ENCODE measurements at regions of chr17 and their contacts with region 1.

Region 1: DNA sequence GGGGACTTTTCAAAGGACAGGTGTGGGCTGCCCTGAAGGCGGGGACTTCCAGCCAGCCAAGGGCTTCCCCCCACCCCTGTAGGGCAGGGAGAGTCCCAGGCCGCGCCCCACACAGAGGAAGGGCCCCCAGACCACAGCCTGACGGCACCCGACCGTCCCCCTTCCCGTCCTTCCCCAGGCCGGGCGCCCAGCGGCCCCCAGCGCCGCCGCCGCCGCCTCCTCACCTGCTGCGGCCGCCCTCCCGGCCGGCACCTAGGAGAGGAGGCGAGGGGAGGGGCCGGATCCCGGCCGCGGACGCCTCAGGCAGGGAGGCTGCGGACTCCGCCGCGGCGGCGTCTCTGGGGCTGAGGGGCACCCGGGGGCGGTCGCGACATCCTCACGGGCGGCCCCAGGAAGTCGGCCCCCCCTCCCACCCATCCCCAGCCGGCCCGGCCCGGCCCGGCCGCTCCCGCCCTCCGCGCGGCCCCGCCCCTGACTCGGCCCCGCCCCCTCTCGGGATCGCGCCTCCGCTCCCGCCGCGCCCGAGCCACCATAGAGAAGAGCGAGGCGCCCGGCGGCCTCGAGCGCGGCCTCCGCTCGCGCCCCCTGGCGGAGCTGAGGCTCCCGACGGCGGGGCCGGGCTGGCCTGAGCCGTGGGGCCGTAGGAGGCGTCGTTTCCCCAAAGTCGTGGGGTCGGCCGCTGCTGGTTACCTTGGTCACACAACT is 25.5 kb upstream of the RFFL start:
- DNase-seq: peak; percentile 61 to 93
- H3K4me3 ChIP-seq: peak overlapping the region; percentile 85 to 98
- H3K27ac ChIP-seq: peak overlapping the region; percentile 81 to 90
- H3K4me1 ChIP-seq: peaks cover 2 to 11% of the 10 kb centered on the region in 2 donors
- H3K27me3 ChIP-seq: no peaks in the 10 kb centered on the region
- CTCF ChIP-seq: peak; percentile 66 to 91 (median 78)

Region 2: DNA sequence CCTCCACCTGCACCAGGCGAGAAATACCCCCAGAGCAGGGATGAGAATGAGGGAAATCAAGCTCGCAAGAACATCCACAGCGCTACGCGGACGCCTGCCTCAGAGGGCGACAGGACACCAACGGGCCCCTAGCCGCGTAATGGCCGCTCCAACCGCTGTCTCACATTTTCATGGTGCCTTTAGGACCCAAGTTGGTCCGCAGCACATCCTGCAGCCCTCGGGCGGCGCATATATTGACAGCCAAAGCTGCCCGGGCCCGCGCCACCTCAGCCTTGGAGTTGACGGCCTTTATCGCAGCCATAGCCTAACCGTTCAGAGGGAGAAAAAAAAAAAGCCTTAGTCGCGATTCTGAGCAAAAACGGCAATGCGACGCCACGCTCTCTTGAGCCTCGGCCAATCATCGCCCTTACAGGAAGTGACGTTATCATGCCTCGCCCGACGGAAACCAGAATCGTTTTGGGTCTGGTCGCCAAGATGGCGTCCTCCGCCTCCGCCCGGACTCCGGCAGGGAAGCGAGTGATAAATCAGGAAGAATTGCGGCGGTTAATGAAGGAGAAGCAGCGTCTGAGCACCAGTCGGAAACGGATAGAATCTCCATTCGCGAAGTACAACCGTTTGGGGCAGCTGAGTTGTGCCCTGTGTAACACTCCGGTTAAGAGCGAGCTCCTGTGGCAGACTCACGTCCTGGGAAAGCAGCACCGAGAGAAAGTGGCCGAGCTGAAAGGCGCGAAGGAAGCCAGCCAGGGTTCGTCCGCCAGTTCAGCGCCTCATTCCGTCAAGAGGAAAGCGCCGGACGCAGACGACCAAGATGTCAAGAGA is 127.7 kb before region 1 on chr17 and contains the starts of genes CCT6B and ZNF830:
- intact Hi-C with region 1: loop called (anchors 1 kb)
- DNase-seq: peak; percentile 65 to 96
- H3K4me3 ChIP-seq: peak within 1 kb of the TSS; percentile 84
- H3K27ac ChIP-seq: peak within 1 kb of the TSS; percentile 87 to 93
- H3K4me1 ChIP-seq: peaks cover 5 to 10% of the 10 kb centered on the region in 2 donors
- H3K27me3 ChIP-seq: no peaks in the 10 kb centered on the region
- CTCF ChIP-seq: peak in 1 of 3 experiments; percentile 1
- total RNA-seq, gene CCT6B: not detected
- total RNA-seq, gene ZNF830: 1.9 TPM

Region 3: DNA sequence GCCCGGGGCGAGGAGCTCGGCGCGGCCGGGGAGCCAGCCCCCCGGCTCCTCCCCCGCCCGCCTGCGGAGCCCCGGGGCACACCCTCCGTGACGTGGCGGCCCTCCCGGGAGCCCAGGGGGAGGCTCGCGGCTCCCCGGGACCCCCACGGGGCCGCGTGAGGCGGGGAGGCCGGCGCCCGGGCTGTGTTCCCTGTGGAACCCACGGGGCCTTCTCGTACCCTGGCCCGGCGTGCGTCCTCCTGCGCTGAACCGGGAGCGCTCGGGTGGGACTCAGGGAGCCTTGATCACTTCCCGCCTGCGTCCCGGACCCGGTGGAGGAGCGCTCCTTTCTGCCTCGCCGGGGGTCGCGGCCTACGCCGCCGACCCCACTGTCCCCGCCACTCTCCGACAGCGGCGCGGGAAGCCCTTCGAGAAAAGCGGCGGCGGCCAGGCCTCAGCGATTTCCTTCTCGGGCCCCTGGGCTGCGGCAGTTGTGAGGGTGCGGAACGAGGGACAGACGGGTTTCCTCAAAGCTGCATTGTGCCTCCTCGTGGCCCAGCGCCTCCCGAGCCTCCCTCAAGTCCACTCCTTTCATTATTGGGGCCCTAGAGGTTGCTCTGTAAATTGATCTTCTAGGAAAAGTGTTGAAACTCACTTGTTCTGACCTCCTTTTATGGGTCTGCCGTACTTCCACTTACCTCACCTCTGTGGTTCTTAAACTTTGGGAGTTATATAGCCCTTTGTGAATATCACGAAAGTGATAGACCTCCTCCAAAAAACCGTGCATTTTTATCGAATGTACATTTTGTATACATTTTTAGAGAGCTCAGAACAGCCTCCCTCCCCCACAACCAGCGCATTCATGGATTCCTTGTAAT is 108.1 kb before region 1 on chr17:
- intact Hi-C with region 1: loop called (anchors 1 kb)
- DNase-seq: peak in 1 of 2 donors; percentile 82
- H3K4me3 ChIP-seq: peak overlapping the region; percentile 96 to 97
- H3K27ac ChIP-seq: peak overlapping the region; percentile 99 to 100
- H3K4me1 ChIP-seq: peaks cover 0 to 22% of the 10 kb centered on the region in 2 donors
- H3K27me3 ChIP-seq: no peaks in the 10 kb centered on the region
- CTCF ChIP-seq: peak in 2 of 3 experiments; percentile 18 to 48

Region 4: GRCh38 chr17:34998205-34998604 is 90.8 kb before region 1 on chr17:
- intact Hi-C with region 1: loop called (anchors 5 kb)
- DNase-seq: peak in 1 of 2 donors; percentile 22
- H3K4me3 ChIP-seq: no peak overlapping the region
- H3K27ac ChIP-seq: peak overlapping the region; percentile 54 to 76
- H3K4me1 ChIP-seq: peaks cover 0 to 13% of the 10 kb centered on the region in 2 donors
- H3K27me3 ChIP-seq: no peaks in the 10 kb centered on the region
- CTCF ChIP-seq: peak; percentile 33 to 53 (median 48)

Region 5: DNA sequence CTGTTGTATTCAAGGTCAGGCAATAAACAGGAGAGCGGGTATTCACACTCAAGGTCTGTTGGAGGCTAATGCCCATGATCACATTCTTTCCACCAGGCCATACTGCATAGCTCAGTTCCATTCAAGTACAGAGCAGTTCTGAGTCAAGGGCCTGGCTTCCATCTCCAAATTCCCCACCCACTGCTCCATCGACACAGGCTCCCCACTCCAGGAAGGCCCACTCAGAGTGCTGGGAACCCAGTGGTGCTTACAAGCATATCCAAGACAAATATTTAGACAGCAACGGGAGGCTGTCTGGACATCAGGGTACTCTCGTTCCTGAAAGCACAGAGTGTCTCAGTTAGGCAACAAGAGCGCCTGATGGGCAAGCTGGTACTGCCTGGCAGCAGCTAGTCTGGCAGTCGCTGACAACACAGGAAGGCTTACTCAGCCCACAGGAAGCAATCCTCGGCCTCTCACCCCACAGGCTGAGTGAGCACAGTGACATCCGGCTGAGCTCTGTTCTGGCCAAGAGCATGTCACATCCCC is 66.4 kb before region 1 on chr17:
- intact Hi-C with region 1: loop called (anchors 1 kb)
- DNase-seq: peak; percentile 89 to 96
- H3K4me3 ChIP-seq: no peak overlapping the region
- H3K27ac ChIP-seq: peak overlapping the region; percentile 85 to 92
- H3K4me1 ChIP-seq: peaks cover 9 to 19% of the 10 kb centered on the region in 2 donors
- H3K27me3 ChIP-seq: no peaks in the 10 kb centered on the region
- CTCF ChIP-seq: peak in 2 of 3 experiments; percentile 37 to 45

Region 6: DNA sequence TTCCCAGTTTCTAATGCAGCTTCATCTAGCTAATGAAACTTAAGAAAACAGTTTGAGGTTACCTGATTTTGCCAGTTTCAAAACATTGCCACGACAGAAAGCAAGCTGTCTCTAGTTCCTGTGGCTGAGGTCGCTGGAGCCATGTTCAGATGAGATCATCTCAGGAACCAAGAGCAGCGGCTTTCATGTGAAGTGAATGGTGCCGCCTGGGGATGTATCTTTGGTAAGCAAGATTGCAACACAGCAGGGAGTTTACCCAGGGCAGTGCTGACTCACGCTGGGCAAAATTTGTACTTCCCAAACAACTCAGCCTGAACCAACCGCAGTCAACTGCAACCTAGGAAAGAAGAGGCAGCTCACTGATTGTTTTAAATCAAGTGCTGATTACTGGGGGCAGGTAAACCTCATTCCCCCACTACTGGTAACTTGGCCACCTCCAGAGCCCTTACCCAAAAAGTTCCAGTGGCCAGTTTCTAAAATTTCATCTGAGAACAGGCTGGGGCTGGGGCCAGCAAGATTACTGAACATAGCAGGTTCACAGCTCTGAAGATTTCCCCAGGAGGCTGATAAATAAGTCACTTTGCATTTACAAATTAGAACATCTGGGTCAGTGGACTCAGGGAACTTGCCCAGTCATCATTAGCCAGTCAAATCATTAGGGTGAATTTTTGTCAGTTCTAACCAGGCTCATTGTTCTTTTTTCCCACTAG is 25.4 kb before region 1 on chr17 and contains the start of gene RFFL:
- intact Hi-C with region 1: loop called (anchors 1 kb)
- DNase-seq: peak; percentile 81 to 95
- H3K4me3 ChIP-seq: peak within 1 kb of the TSS in 1 of 2 donors; percentile 24
- H3K27ac ChIP-seq: peak within 1 kb of the TSS; percentile 68 to 83
- H3K4me1 ChIP-seq: peaks cover 0 to 8% of the 10 kb centered on the region in 2 donors
- H3K27me3 ChIP-seq: no peaks in the 10 kb centered on the region
- CTCF ChIP-seq: peak in 1 of 3 experiments; percentile 29
- total RNA-seq, gene RFFL: 20.0 TPM

Region 7: DNA sequence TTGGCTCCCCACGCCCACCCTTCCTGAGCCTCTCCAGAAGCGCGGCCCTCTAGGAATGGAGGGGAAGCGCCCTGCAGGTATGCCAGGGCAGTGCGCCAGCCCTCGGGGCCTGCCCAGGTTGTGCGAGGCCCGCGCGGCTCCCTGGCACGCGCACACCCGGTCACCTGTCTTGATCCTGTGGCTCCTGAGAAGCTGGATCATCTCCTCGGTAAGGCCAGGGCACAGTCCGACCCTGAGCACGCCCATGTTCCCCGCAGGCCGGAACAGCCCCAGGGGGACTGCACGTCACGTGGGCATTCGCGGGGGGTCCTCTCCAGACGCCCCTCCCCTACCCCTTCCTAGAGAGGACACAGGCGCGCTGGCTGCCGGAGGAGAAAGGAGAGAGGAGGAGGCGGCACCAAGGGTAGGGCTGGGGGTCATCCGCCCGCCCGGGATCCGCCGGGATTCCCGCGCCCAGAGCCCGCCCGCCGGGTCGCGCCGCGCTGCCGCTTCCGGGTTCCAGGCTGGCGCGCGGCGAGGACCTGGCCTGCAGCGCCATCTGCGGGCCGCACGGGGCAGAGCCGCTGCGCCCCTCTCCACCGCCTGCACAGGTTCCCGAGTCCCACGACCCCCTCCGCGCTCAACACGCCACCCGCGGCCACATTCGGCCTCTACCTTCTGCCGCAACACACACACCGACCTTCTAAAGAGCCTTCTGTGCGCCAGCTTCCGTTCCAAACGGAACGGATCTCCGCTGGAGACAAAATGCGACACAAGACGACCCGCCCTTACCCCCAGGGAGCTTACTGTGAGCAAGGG is 30.5 kb after region 1 on chr17 and contains the start of gene RAD51D:
- intact Hi-C with region 1: loop called (anchors 1 kb)
- DNase-seq: peak in 1 of 2 donors; percentile 85
- H3K4me3 ChIP-seq: peak within 1 kb of the TSS; percentile 84 to 91
- H3K27ac ChIP-seq: peak within 1 kb of the TSS; percentile 75 to 81
- H3K4me1 ChIP-seq: peaks cover 4 to 17% of the 10 kb centered on the region in 2 donors
- H3K27me3 ChIP-seq: no peaks in the 10 kb centered on the region
- CTCF ChIP-seq: peak; percentile 77 to 97 (median 82)
- total RNA-seq, gene RAD51D: 3.7 TPM

Region 8: DNA sequence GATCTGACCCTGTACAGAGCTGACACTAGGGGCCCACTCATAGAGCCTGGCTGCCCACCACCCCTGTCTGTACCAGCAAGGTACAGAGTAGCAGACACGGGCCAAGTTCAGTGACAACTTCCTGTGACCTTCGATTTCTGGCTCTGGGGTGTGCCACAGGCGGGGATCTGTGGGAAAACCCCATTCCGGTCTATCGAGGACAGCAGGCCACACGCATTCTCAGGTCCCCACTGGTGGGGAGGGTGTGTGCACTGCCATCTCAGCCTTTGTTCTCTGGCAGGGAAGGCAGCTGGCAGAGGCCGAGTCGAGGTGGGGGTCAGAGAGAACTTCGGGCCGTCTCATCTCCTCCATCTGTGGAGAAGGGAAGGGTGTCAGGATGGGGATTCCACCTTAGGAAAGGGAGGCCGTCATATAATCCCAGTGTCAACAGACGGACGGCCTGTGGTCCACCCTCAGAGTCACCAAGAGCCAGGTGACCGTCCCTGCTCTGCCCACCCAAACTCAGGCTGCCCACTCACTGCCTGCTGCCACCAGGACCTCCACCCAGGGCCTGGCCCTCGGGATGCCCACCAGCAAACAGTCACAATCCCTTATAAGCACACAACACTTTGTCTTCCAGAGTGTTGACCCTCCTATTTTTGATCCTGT is 43.2 kb after region 1 on chr17:
- intact Hi-C with region 1: no loop called
- DNase-seq: no peak
- H3K4me3 ChIP-seq: no peak overlapping the region
- H3K27ac ChIP-seq: no peak overlapping the region
- H3K4me1 ChIP-seq: no peaks in the 10 kb centered on the region
- H3K27me3 ChIP-seq: no peaks in the 10 kb centered on the region
- CTCF ChIP-seq: no peak

Region 9: DNA sequence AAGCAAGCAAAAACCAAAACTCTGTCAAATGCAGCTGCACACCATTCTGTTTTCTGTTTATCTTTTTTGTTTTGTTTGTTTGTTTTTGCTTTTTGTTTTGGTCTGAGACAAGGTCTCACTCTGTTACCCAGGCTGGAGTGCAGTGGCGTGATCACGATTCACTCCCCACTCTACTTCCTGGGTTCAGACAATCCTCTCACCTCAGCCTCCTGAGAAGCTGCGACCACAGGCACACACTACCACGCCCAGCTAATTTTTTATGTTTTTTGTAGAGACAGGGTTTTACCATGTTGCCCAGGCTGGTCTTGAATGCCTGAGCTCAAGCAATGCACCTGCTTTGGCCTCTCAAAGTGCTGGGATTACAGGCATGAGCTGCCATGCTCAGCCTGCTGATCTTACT is 378.8 kb after region 1 on chr17:
- intact Hi-C with region 1: no loop called
- DNase-seq: no peak
- H3K4me3 ChIP-seq: no peak overlapping the region
- H3K27ac ChIP-seq: no peak overlapping the region
- H3K4me1 ChIP-seq: no peaks in the 10 kb centered on the region
- H3K27me3 ChIP-seq: no peaks in the 10 kb centered on the region
- CTCF ChIP-seq: no peak